Posterior vena cava (tissue), 2 donors: ENCODE measurements at regions of chr3 and their contacts with region 1.

Region 1: GRCh38 chr3:28756056-28756455 is 407.4 kb upstream of the AZI2 start:
- DNase-seq: no peak

Region 2: GRCh38 chr3:28521663-28522062 is 234.4 kb before region 1 on chr3:
- intact Hi-C with region 1: loop called in 1 of 2 experiments (anchors 10 kb)
- DNase-seq: no peak

Region 3: GRCh38 chr3:29718661-29719065 is 962.6 kb after region 1 on chr3:
- intact Hi-C with region 1: no loop called
- DNase-seq: no peak